PC-3 (cell line): ENCODE measurements at regions of chr1 and their contacts with region 1.

Region 1: DNA sequence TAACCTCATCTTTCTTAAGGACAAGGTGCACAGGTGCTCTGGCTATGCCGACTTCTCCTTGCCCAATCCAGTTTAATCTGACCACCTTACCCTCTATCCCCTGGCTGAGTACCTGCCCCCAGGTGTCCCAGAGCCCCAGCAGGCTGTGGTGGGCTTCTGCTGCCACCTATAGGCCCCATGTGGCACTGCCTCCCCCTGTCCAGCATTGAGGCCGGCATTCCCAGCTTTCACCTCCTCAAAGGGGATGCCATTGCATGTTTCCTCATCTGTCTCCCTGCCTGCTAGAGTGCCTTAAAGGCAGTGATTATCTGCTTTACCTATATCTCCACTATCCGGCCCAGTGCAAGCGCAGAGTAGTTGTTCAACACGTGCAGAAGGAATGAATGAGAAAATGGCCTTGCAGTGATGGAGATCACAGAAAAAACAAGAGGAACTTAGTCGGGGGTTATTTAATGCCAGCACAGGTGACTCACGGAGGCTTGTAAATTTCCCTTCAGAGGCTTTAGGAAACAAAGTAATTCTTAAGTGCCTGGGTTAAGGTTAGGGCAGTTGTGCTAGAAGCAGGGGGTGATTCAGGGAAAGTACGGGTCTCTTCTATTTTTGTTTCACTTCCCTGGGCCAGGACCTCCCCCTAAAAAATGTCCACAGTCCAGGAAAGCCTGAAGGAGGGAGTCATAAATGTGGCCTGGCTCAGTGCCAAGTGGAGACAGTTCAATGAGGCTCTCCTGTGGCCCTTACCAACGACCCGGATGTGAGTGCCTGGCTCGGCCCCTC is 131.8 kb upstream of the NGF start:
- DNase-seq: peak; percentile 86
- ATAC-seq: peak; percentile 76
- H3K4me3 ChIP-seq: peak overlapping the region; percentile 53
- H3K27ac ChIP-seq: peak overlapping the region; percentile 68
- H3K4me1 ChIP-seq: peaks cover 35% of the 10 kb centered on the region
- H3K27me3 ChIP-seq: no peaks in the 10 kb centered on the region
- CTCF ChIP-seq: peak; percentile 98

Region 2: DNA sequence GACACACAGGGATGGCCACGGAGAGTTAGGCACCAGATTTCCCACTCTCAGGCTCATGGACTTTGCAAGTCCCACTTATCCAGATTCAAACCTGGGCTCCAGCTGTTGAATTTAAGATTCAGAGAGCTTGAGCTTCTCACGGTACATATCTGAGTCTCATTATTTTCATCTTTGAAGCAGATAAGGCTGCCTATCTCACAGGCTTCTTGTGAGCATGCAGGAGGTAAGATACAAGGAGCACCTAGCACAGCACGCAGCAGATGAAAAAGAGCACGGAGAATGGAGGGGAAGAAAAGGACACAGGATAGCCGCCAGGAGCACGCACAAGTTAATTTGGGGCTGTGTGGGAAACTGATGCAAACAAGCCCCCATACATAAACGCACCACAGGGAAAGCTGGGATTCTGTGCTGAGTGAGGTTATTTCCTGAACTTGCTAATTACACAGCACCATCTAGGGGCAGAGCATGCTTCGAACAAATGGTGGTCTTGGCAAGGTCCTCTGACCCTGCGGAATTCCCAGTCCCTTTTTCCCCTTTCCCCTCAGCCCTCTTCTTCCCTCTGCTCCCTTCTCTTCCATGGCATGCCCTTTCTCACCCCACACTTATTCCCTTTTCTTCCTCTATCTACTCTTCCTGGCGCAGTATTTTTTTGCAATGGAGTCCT is 37.2 kb after region 1 on chr1:
- CTCF ChIA-PET with region 1: interaction called, 5 read pairs
- POLR2A ChIA-PET with region 1: no interaction called
- intact Hi-C with region 1: loop called (anchors 2 kb)
- DNase-seq: peak; percentile 47
- ATAC-seq: peak; percentile 48
- H3K4me3 ChIP-seq: no peak overlapping the region
- H3K27ac ChIP-seq: peak overlapping the region; percentile 31
- H3K4me1 ChIP-seq: peaks cover 52% of the 10 kb centered on the region
- H3K27me3 ChIP-seq: no peaks in the 10 kb centered on the region
- CTCF ChIP-seq: peak; percentile 65

Region 3: DNA sequence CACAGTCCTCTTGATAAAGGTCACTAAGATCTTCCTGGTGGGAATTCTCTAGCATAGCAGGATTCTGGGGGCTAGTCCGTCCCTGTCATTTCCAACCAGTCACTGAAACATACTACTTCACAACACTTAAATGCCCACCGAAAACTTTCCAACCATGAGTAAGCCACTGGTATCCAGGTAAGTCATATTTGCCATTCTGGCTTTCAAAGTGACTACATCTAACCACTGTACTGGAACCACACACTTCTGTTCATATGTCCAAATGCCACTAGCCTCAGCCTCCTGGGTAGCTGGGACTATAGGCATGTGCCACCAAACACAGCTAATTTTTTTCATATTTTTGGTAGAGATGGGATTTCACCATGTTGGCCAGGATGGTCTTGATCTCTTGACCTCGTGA is 107.6 kb after region 1 on chr1:
- CTCF ChIA-PET with region 1: no interaction called
- POLR2A ChIA-PET with region 1: no interaction called
- intact Hi-C with region 1: no loop called
- DNase-seq: no peak
- ATAC-seq: no peak
- H3K4me3 ChIP-seq: no peak overlapping the region
- H3K27ac ChIP-seq: no peak overlapping the region
- H3K4me1 ChIP-seq: no peaks in the 10 kb centered on the region
- H3K27me3 ChIP-seq: no peaks in the 10 kb centered on the region
- CTCF ChIP-seq: no peak

Region 4: GRCh38 chr1:115595279-115596079 is 125.6 kb after region 1 on chr1:
- CTCF ChIA-PET with region 1: interaction called, 3 read pairs
- POLR2A ChIA-PET with region 1: no interaction called
- intact Hi-C with region 1: loop called (anchors 1 kb)
- DNase-seq: peak; percentile 97
- ATAC-seq: peak; percentile 96
- H3K4me3 ChIP-seq: no peak overlapping the region
- H3K27ac ChIP-seq: peak overlapping the region; percentile 1; the same call in 1 of the 2 replicates
- H3K4me1 ChIP-seq: peaks cover 20% of the 10 kb centered on the region
- H3K27me3 ChIP-seq: no peaks in the 10 kb centered on the region
- CTCF ChIP-seq: peak; percentile 96